ENCODE measurements at regions of chr5 and their contacts with region 1.

Region 1: DNA sequence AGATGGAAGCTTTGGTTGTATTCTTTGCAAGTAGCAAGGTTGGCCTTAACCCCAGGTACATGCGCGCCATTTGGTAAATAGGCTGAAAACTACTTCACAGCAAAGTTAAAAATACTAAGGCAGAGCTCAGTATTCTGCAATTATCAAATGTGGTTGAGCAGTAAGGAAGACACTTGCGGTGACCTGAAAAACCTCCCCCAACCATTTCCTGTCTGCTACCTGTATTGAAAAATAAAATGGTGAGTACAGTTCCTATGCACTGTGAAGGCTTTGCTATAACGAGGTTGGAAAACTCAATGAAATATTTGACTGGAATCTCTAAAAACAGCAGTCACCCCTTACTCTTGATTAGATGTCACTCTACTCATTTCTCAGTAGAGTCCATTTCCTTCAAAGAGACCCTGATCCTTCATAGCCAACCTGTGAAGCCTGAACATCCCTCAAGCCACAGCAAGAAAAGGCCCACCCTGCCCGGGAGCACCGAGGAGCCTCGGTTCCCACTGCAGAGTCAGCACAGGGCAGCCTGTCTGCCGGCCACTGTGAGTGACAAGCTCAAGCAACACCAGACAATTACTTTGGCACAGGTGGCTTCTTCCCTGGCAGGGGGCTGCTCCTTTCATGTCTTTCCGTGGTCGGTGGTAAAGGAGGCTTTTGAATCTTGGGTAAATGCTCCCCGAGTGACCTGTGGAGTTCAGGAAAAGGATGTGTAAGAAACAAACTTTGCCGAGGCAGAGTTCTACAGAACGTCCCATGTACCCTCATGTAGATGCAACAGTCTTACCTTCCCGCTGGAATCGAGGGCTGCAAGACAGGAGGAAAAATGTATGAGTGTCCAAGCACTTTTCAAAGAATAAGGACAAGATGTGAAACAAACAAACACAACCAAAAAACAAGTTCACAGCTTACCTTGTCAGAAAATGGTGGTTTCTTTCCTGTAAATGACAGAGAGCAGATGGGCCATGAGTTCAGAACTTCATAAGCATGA is 29.6 kb downstream of the C5orf58 start:
- DNase-seq: peak in 7 of 9 donors; percentile 78 to 89 (median 86)
- ATAC-seq: peak; percentile 90
- H3K4me3 ChIP-seq: peak overlapping the region; percentile 21
- H3K4me3 Mint-ChIP-seq: peak overlapping the region; percentile 64 to 87 (median 76)
- H3K27ac ChIP-seq: peak overlapping the region; percentile 74
- H3K27ac Mint-ChIP-seq: peak overlapping the region; percentile 89 to 99 (median 97)
- H3K4me1 ChIP-seq: peaks cover 49 to 72% of the 10 kb centered on the region in 2 donors
- H3K4me1 Mint-ChIP-seq: peaks cover 52 to 99% (median 96%) of the 10 kb centered on the region in 7 donors
- H3K27me3 ChIP-seq: no peaks in the 10 kb centered on the region
- H3K27me3 Mint-ChIP-seq: no peaks in the 10 kb centered on the region

Region 2: DNA sequence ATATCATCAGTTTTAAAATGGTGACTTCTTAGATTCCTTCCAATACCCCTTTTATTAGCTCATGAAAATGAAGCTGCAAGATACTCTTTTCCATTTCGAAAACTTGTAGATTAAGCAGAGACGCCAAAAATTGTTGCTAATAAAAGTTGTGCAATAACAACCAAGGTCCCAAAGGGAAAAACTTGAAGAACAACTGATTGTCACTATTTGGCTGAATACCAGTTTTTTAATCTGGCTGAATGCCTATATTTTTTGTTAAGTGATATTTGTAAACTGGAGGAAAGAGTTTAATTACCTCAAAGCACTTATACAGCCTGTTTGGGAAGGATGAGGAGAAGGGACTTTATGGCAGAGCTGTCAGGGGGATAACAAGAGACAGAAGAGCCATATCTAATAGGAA is 15.0 kb before region 1 on chr5:
- CTCF ChIA-PET with region 1: interaction called, 7 read pairs
- POLR2A ChIA-PET with region 1: interaction called, 14 read pairs
- intact Hi-C with region 1: no loop called
- DNase-seq: no peak
- ATAC-seq: no peak
- H3K4me3 ChIP-seq: no peak overlapping the region
- H3K4me3 Mint-ChIP-seq: no peak overlapping the region
- H3K27ac ChIP-seq: no peak overlapping the region
- H3K27ac Mint-ChIP-seq: peak overlapping the region in 4 of 9 donors; percentile 23 to 77 (median 36)
- H3K4me1 ChIP-seq: no peaks in the 10 kb centered on the region
- H3K4me1 Mint-ChIP-seq: peaks cover 0 to 23% (median 9%) of the 10 kb centered on the region in 7 donors
- H3K27me3 ChIP-seq: no peaks in the 10 kb centered on the region
- H3K27me3 Mint-ChIP-seq: no peaks in the 10 kb centered on the region

Region 3: DNA sequence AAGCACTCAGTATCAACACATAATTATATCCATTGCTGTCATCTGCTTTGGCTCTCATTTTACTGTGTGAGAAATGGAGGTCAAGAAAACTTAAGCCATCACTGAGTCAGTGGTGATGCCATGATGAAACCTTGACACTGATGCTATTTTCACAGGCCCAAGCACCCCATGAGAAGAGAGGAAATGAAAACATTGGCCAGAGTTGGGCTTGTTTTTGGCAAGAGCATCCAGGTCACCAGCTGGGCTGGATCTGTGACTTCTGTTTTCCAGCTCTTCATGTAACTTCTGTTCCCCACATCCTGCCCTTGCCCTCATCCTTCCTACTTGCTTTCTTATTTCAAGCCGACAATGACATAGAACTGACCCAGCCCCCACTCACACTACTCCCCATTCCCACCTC is 25.2 kb after region 1 on chr5:
- CTCF ChIA-PET with region 1: interaction called, 430 read pairs
- POLR2A ChIA-PET with region 1: interaction called, 95 read pairs
- intact Hi-C with region 1: no loop called
- DNase-seq: no peak
- ATAC-seq: peak; percentile 59
- H3K4me3 ChIP-seq: no peak overlapping the region
- H3K4me3 Mint-ChIP-seq: peak overlapping the region; percentile 57 to 100 (median 94)
- H3K27ac ChIP-seq: peak overlapping the region; percentile 75
- H3K27ac Mint-ChIP-seq: peak overlapping the region; percentile 57 to 98 (median 93)
- H3K4me1 ChIP-seq: peaks cover 97 to 98% of the 10 kb centered on the region in 2 donors
- H3K4me1 Mint-ChIP-seq: peaks cover 94 to 100% (median 100%) of the 10 kb centered on the region in 7 donors
- H3K27me3 ChIP-seq: no peaks in the 10 kb centered on the region
- H3K27me3 Mint-ChIP-seq: no peaks in the 10 kb centered on the region

Region 4: DNA sequence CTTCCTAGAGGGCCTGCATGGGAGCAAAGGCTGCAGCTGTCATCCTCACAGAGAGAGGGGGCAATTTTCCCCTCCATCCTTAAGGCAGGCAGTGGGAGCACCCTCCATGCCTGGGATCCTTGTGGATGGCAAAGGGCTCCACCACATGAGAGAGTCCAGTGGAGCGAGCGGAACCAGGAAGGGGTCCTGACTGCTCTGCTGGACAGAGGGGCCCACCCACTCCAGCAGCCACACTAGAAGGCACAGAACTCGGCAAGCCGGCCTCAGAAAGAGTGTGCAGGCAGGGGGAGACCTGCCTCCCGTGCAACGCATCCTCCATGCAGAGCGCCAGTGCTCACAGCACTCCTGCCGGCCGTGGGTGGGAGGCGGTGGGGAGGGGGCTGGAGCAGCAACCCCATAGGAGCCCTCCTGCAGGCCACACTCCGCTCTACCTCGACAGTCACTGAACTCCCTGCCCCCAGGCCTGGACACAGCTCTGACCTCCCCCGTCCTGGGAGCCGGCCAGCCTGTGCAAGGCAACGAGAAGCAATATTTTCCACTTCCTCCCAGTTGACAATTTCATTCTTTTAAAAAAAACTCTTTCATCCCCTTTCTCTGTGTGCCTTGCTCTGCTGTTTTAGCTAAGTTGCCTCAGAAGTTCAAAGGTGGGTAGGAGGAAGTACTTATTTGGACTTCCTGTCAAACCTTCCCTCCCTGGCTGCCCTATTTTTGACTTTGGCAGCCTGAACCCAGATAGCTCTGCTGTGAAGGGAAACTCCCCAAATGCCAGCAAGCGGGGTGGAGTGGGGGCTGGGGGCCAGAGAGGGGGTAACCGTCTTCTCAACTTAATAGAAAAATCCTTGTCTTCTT is 40.5 kb after region 1 on chr5:
- CTCF ChIA-PET with region 1: interaction called, 430 read pairs
- POLR2A ChIA-PET with region 1: interaction called, 95 read pairs
- intact Hi-C with region 1: loop called in 1 of 2 experiments (anchors 1 kb)
- DNase-seq: peak; percentile 44 to 92 (median 84)
- ATAC-seq: peak; percentile 86
- H3K4me3 ChIP-seq: peak overlapping the region; percentile 54
- H3K4me3 Mint-ChIP-seq: peak overlapping the region; percentile 85 to 99 (median 92)
- H3K27ac ChIP-seq: peak overlapping the region; percentile 79
- H3K27ac Mint-ChIP-seq: peak overlapping the region; percentile 74 to 99 (median 96)
- H3K4me1 ChIP-seq: peaks cover 56 to 61% of the 10 kb centered on the region in 2 donors
- H3K4me1 Mint-ChIP-seq: peaks cover 56 to 98% (median 87%) of the 10 kb centered on the region in 7 donors
- H3K27me3 ChIP-seq: no peaks in the 10 kb centered on the region
- H3K27me3 Mint-ChIP-seq: no peaks in the 10 kb centered on the region

Region 5: GRCh38 chr5:170333161-170333910 is 71.0 kb after region 1 on chr5:
- CTCF ChIA-PET with region 1: interaction called, 278 read pairs
- POLR2A ChIA-PET with region 1: interaction called, 45 read pairs
- intact Hi-C with region 1: loop called in 1 of 2 experiments (anchors 1 kb)
- DNase-seq: peak in 6 of 9 donors; percentile 36 to 61 (median 50)
- ATAC-seq: peak; percentile 36
- H3K4me3 ChIP-seq: peak overlapping the region; percentile 40
- H3K4me3 Mint-ChIP-seq: peak overlapping the region in 4 of 10 donors; percentile 77 to 82 (median 81)
- H3K27ac ChIP-seq: peak overlapping the region; percentile 87
- H3K27ac Mint-ChIP-seq: no peak overlapping the region
- H3K4me1 ChIP-seq: peaks cover 79 to 87% of the 10 kb centered on the region in 2 donors
- H3K4me1 Mint-ChIP-seq: peaks cover 0 to 65% (median 30%) of the 10 kb centered on the region in 7 donors
- H3K27me3 ChIP-seq: no peaks in the 10 kb centered on the region
- H3K27me3 Mint-ChIP-seq: peaks cover 0 to 3% (median 0%) of the 10 kb centered on the region in 5 donors

Region 6: GRCh38 chr5:171367424-171368370 is 1105.3 kb after region 1 on chr5:
- CTCF ChIA-PET with region 1: no interaction called
- POLR2A ChIA-PET with region 1: no interaction called
- intact Hi-C with region 1: no loop called
- DNase-seq: no peak
- ATAC-seq: no peak
- H3K4me3 ChIP-seq: no peak overlapping the region
- H3K4me3 Mint-ChIP-seq: no peak overlapping the region
- H3K27ac ChIP-seq: no peak overlapping the region
- H3K27ac Mint-ChIP-seq: no peak overlapping the region
- H3K4me1 ChIP-seq: no peaks in the 10 kb centered on the region
- H3K4me1 Mint-ChIP-seq: no peaks in the 10 kb centered on the region
- H3K27me3 ChIP-seq: no peaks in the 10 kb centered on the region
- H3K27me3 Mint-ChIP-seq: peaks cover 4 to 23% (median 17%) of the 10 kb centered on the region in 5 donors

Measured in naive thymus-derived CD4-positive, alpha-beta T cell (primary cell).